Aorta (tissue), 5 donors: ENCODE measurements at regions of chr3 and their contacts with region 1.

Region 1: DNA sequence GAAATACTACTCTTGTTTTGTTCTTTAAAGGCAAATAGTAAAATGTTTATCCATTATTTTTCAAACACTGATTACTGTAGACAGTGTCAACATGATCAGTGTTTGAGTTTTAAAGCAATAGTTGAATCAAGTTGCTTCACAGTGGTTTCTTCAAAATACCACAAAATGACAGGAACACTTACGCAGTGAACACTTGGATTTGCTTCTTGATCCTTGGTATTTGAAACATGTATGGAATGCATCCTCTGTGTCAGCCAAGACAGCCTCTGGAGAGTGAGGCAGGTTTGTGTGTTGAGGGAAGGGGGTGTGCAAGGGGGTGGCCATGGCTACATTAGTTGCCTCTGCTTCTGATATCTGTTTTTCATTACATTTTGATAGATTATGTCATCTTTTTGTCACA is 413.0 kb downstream of the RBMS3 start:
- DNase-seq: no peak
- ATAC-seq: no peak
- H3K4me3 ChIP-seq: no peak overlapping the region
- H3K27ac ChIP-seq: no peak overlapping the region
- H3K4me1 ChIP-seq: peaks cover 4 to 5% of the 10 kb centered on the region in 2 donors
- H3K27me3 ChIP-seq: no peaks in the 10 kb centered on the region

Region 2: DNA sequence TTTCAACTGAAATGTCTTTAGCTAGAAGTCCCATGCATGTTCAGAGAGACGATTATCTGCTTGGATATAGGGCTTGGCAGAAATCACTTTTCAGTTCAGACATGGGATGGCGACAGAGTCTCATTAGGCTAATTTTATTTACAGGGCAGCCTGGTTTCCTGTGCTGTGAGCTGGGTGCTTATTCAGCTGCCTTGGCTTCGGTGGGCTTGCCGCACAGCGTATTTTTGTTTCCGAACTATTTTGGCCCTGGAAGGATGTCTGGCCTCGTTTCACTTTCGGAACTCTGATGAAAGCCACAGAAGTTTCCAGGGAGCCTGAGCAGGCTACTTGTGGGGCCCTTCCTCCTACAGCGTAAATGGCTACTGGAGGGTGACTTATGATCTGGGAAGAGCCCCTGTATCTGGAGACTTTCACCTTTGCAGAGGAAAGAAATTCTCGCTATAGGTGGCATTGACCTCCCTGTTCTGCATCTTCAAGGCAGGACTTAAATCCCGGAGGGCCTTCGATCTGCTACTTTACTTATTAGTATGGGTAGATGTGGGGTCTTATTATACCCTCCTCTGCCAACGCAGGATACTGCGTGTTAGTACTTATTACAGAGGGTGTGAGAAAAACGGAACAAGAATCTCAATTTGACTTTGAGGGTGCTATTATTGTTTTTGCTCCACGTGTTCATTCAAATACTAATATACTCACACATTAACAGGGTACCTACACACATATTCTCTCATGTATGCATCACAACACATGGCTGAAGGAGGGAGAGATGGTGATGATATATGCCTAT is 777.0 kb before region 1 on chr3:
- intact Hi-C with region 1: loop called in 1 of 2 experiments (anchors 10 kb)
- DNase-seq: peak; percentile 80 to 81
- ATAC-seq: peak; percentile 90
- H3K4me3 ChIP-seq: no peak overlapping the region
- H3K27ac ChIP-seq: peak overlapping the region in 1 of 2 donors; percentile 23
- H3K4me1 ChIP-seq: no peaks in the 10 kb centered on the region
- H3K27me3 ChIP-seq: no peaks in the 10 kb centered on the region